ENCODE measurements at regions of chr2 and their contacts with region 1.

Region 1: DNA sequence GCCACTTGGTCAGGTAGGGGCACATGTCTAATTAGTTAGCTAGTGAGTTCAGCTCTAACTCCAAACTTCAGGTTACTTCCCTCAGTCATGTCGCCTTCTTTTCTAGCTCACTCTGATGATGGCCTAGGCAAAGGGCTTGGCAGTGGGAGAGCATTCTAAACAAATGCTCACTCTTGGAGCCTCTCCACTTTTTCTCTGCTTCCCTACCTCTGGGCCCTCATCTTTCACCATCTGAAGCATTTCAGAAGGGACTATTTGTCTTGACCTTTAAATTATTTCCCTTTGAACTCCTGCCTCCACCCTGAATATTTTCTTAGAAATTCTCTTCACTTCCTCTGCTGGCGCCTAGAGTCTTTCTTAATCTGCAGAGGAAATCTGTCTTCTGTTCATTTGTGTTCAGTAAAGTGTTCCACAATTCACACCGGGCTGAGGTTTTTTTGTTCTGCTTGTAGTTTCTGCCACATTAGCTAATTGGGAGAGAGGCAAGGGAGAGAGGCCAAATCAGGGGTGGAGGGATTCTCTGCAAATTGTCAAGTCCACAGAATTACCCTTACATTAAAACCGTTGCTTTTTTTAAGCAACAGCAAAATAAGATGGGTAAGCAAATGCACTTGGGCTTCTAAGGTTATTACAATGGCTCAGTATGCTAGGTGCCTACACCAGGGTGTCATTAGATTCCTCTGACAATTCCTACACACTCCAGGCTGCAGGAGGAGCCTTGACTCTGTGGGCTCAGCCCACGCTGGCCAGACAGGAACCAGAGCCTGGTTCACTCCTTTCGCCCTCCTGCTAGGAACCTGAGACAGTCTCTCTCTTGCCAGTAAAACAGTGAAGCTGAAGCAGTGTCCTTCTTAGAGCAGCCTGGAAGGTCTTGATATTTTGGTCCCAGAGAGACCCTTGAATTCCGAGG is 5.5 kb downstream of the MSGN1 start:
- DNase-seq: peak in 1 of 2 donors; percentile 36
- ATAC-seq: peak; percentile 82 to 90
- H3K4me3 ChIP-seq: peak overlapping the region; percentile 1 to 33 (median 4)
- H3K27ac ChIP-seq: peak overlapping the region; percentile 73 to 86 (median 80)
- H3K4me1 ChIP-seq: peaks cover 27 to 29% of the 10 kb centered on the region in 2 donors
- H3K27me3 ChIP-seq: no peaks in the 10 kb centered on the region
- CTCF ChIP-seq: no peak
- POLR2A ChIP-seq: no peak

Region 2: GRCh38 chr2:17719562-17720371 is 102.0 kb before region 1 on chr2:
- in situ Hi-C with region 1: loop called in 2 of 4 experiments (anchors 5 to 10 kb)
- intact Hi-C with region 1: no loop called
- DNase-seq: no peak
- ATAC-seq: no peak
- H3K4me3 ChIP-seq: no peak overlapping the region
- H3K27ac ChIP-seq: no peak overlapping the region
- H3K4me1 ChIP-seq: no peaks in the 10 kb centered on the region
- H3K27me3 ChIP-seq: no peaks in the 10 kb centered on the region
- CTCF ChIP-seq: peak; percentile 56 to 80 (median 67)
- POLR2A ChIP-seq: no peak

Region 3: GRCh38 chr2:17788773-17789172 is 33.0 kb before region 1 on chr2:
- in situ Hi-C with region 1: no loop called
- intact Hi-C with region 1: loop called (anchors 5 kb)
- DNase-seq: no peak
- ATAC-seq: no peak
- H3K4me3 ChIP-seq: no peak overlapping the region
- H3K27ac ChIP-seq: no peak overlapping the region
- H3K4me1 ChIP-seq: peaks cover 9 to 14% of the 10 kb centered on the region in 2 donors
- H3K27me3 ChIP-seq: no peaks in the 10 kb centered on the region
- CTCF ChIP-seq: no peak
- POLR2A ChIP-seq: no peak

Region 4: GRCh38 chr2:17901246-17901645 is 79.5 kb after region 1 on chr2:
- in situ Hi-C with region 1: no loop called
- intact Hi-C with region 1: no loop called
- DNase-seq: no peak
- ATAC-seq: peak in 1 of 2 donors; percentile 36
- H3K4me3 ChIP-seq: no peak overlapping the region
- H3K27ac ChIP-seq: no peak overlapping the region
- H3K4me1 ChIP-seq: peaks cover 3 to 15% of the 10 kb centered on the region in 2 donors
- H3K27me3 ChIP-seq: no peaks in the 10 kb centered on the region
- CTCF ChIP-seq: no peak
- POLR2A ChIP-seq: no peak